ENCODE measurements at regions of chr20 and their contacts with region 1.

Region 1: GRCh38 chr20:48657475-48658470 is 170.0 kb downstream of the PREX1 start:
- DNase-seq: peak in 4 of 6 donors; percentile 51 to 78 (median 65)
- ATAC-seq: peak; percentile 73 to 94 (median 90)
- H3K4me3 ChIP-seq: no peak overlapping the region
- H3K27ac ChIP-seq: no peak overlapping the region
- H3K4me1 ChIP-seq: no peaks in the 10 kb centered on the region
- H3K27me3 ChIP-seq: no peaks in the 10 kb centered on the region
- CTCF ChIP-seq: peak; percentile 75 to 92 (median 88)

Region 2: DNA sequence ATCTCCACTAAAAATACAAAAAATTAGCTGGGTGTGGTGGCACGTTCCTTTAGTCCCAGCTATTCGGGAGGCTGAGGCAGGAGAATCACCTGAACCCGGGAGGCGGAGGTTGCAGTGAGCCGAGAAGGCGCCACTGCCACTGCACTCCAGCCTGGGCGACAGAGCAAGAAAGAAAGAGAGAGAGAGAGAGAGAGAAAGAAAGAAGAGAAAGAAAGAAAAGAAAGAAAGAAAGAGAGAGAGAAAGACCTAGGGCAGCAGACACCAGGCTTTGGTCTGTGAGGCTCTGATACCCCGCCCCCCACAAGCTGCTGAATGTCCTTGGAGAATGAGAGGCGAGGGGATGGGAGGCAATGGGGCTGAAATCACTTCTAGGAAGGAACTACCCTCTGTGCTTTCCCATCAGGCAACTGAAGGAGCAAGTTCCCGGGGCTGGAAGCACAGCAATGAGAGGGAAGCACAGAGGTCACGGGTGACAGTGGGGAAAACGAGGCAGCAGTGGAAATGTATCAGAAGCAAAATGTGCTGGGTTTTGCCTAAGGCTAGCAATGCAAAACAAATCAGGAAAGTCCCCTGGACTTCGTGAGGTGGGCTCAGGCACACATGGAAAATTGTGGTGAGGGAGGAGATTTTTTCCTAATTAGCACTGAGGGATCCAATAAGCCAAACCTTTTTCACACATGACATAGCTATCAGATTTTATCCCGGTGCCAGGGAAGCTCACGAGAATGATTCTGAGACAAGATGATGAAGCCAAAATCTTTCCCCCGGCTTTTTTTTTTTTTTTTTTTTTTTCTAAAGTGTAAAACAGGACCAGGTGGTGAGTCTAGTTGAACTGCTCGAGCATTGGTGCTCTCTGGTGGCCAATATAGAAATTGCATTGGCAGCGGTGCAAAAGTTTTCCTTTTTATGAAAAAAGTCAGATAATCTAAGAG is 246.9 kb after region 1 on chr20:
- intact Hi-C with region 1: loop called (anchors 2 to 5 kb)
- DNase-seq: peak in 4 of 6 donors; percentile 20 to 74 (median 48)
- ATAC-seq: peak; percentile 63 to 91 (median 85)
- H3K4me3 ChIP-seq: no peak overlapping the region
- H3K27ac ChIP-seq: no peak overlapping the region
- H3K4me1 ChIP-seq: no peaks in the 10 kb centered on the region
- H3K27me3 ChIP-seq: no peaks in the 10 kb centered on the region
- CTCF ChIP-seq: peak; percentile 58 to 85 (median 72)

Region 3: GRCh38 chr20:48962976-48963771 is 305.4 kb after region 1 on chr20:
- intact Hi-C with region 1: no loop called
- DNase-seq: no peak
- ATAC-seq: peak in 3 of 4 donors; percentile 12 to 45 (median 14)
- H3K4me3 ChIP-seq: no peak overlapping the region
- H3K27ac ChIP-seq: no peak overlapping the region
- H3K4me1 ChIP-seq: no peaks in the 10 kb centered on the region
- H3K27me3 ChIP-seq: no peaks in the 10 kb centered on the region
- CTCF ChIP-seq: no peak

Region 4: DNA sequence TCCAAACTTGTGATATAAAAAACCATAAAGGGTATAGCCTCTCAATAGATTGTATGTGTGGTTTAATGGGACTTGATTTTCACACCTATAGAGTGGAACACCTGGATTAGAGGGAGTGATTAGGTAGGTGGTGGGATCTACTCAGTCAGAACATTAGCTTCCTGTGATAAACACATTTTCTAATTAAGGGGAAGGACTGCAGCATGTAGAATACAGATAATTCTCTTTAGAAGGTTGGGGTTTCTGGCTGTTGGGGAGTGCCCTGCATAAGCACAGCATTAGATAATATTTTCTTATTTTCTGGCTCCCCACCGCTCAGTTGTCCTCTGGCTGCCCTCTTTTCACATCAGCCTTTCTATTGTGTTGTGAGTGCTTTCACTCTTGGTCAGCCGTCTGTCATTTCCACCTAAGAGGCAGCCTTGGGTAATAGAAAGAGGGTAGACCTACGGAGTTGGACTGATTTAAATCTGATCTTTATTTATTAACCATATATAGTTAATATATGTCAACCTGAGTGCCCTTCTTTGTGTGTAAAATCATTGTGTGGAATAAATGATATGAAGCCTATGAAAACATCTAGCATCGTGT is 396.4 kb after region 1 on chr20:
- intact Hi-C with region 1: no loop called
- DNase-seq: no peak
- ATAC-seq: no peak
- H3K4me3 ChIP-seq: no peak overlapping the region
- H3K27ac ChIP-seq: no peak overlapping the region
- H3K4me1 ChIP-seq: no peaks in the 10 kb centered on the region
- H3K27me3 ChIP-seq: no peaks in the 10 kb centered on the region
- CTCF ChIP-seq: no peak

Measured in pancreas (tissue), 10 donors.